PC-9 (cell line): ENCODE measurements at regions of chr15 and their contacts with region 1.

Region 1: GRCh38 chr15:95875121-95875688 is 455.3 kb upstream of the NR2F2 start:
- DNase-seq: peak; percentile 63 to 79
- H3K4me3 ChIP-seq: no peak overlapping the region
- H3K27ac ChIP-seq: peak overlapping the region; percentile 25
- H3K4me1 ChIP-seq: peaks cover 37% of the 10 kb centered on the region
- H3K27me3 ChIP-seq: no peaks in the 10 kb centered on the region
- CTCF ChIP-seq: no peak

Region 2: DNA sequence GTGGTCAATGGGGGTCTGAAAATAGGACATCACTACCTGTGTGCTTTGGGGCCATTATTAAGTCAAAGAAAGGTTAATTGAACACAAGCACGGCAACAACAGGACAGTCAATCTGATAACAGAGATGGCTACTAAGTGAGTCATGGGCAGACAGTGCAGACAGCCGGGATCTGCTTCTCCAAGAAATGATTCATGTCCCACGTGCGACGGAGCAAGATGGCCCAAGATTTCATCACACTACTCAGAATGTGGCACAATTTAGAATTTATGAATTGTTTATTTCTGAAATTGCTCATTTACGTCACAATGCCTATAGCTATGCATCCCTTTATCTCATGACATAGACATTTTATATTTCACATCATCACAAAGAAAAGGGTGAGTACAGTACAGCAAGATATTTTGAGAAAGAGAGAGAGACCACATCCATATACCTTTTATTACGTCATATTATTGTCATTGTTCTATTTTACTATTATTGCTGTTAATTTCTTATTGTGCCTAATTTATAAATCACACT is 315.3 kb before region 1 on chr15:
- CTCF ChIA-PET with region 1: no interaction called
- POLR2A ChIA-PET with region 1: no interaction called
- intact Hi-C with region 1: loop called (anchors 10 kb)
- DNase-seq: peak; percentile 28 to 69
- H3K4me3 ChIP-seq: no peak overlapping the region
- H3K27ac ChIP-seq: peak overlapping the region; percentile 82
- H3K4me1 ChIP-seq: peaks cover 38% of the 10 kb centered on the region
- H3K27me3 ChIP-seq: no peaks in the 10 kb centered on the region
- CTCF ChIP-seq: no peak

Region 3: DNA sequence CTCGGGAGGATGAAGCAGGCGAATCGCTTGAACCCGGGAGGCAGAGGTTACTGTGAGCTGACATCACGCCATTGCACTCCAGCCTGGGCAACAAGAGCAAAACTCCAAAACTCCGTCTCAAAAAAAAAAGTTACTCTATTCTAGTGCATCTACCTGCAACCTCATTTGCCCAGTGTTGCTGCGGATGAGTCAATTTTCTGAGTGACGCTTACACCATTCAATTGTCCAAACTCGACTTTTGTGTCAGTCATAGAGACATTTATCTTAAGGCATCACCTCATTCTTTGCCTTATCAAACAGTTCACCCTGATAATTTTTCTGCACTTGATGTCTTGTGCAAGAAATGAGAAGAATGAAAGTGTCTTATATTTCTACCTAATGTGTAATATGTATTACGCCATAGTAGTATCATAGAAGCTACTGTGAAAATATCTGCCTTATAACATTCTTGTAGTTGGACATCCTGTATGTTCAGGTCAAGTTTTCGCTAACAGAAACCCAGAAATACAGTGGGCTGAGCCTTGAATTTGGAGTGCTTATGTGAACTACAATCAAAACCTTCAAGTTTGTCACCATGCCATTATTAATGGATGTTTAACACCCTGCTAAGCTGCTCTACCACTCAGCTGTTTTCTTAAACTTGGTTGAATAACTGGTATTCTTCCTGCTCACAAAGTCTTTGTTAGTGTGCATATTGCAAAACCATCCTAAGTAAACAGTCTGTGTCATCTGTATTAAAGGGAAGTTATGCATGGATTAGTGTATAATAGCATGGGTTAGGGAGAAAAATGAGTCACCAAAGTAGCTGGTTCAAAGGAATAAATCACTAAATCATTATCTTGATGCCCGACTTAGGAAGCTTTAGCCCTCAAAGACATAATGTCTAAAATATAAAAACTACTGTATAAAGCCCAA is 75.7 kb before region 1 on chr15:
- CTCF ChIA-PET with region 1: no interaction called
- POLR2A ChIA-PET with region 1: no interaction called
- intact Hi-C with region 1: loop called (anchors 1 kb)
- DNase-seq: peak; percentile 19 to 97
- H3K4me3 ChIP-seq: no peak overlapping the region
- H3K27ac ChIP-seq: peak overlapping the region; percentile 66
- H3K4me1 ChIP-seq: peaks cover 20% of the 10 kb centered on the region
- H3K27me3 ChIP-seq: no peaks in the 10 kb centered on the region
- CTCF ChIP-seq: no peak

Region 4: DNA sequence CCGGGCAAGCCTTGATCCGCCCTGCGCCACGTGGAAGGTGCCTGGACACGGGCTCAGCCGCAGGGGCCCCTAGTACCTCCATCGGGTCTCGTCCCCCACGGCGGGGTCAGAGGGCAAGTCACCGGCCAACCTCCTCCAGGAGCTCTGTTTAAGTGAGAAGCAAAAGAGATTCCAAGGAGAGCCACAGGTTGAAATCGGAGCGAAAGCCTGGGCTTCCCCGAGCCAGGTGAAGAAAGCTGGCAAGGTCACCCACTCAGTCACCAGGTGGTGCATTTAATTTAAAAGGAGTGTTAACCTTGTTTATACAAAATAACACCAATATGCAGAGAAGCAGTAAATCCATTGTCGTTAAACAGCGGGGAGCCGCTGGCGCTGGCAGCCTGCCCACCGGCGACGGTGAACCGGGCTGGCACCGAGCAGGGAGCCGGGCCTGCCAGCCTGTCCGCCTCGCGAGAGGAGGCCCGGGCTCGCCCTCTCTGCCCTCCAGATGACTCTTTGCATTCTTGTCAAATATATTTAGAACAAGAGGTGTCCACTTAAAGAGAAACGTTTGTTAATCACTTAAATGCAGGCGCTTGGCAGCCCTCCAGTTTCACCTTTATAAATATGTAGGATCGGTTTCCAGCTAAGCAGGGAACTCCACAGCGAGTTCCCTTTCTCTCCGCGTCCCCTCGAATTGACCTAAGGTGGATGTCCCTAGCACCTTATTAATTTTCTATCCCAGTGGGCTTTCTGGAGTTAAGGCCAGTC is 178.0 kb after region 1 on chr15:
- CTCF ChIA-PET with region 1: no interaction called
- POLR2A ChIA-PET with region 1: no interaction called
- intact Hi-C with region 1: loop called (anchors 1 kb)
- DNase-seq: peak; percentile 79 to 84
- H3K4me3 ChIP-seq: peak overlapping the region; percentile 68
- H3K27ac ChIP-seq: peak overlapping the region; percentile 92
- H3K4me1 ChIP-seq: peaks cover 53% of the 10 kb centered on the region
- H3K27me3 ChIP-seq: no peaks in the 10 kb centered on the region
- CTCF ChIP-seq: no peak

Region 5: GRCh38 chr15:96273317-96274086 is 398.3 kb after region 1 on chr15:
- CTCF ChIA-PET with region 1: no interaction called
- POLR2A ChIA-PET with region 1: no interaction called
- intact Hi-C with region 1: loop called (anchors 1 kb)
- DNase-seq: peak; percentile 85 to 100
- H3K4me3 ChIP-seq: no peak overlapping the region; the same call in 1 of the 2 replicates
- H3K27ac ChIP-seq: peak overlapping the region; percentile 95
- H3K4me1 ChIP-seq: peaks cover 86% of the 10 kb centered on the region
- H3K27me3 ChIP-seq: no peaks in the 10 kb centered on the region
- CTCF ChIP-seq: no peak

Region 6: DNA sequence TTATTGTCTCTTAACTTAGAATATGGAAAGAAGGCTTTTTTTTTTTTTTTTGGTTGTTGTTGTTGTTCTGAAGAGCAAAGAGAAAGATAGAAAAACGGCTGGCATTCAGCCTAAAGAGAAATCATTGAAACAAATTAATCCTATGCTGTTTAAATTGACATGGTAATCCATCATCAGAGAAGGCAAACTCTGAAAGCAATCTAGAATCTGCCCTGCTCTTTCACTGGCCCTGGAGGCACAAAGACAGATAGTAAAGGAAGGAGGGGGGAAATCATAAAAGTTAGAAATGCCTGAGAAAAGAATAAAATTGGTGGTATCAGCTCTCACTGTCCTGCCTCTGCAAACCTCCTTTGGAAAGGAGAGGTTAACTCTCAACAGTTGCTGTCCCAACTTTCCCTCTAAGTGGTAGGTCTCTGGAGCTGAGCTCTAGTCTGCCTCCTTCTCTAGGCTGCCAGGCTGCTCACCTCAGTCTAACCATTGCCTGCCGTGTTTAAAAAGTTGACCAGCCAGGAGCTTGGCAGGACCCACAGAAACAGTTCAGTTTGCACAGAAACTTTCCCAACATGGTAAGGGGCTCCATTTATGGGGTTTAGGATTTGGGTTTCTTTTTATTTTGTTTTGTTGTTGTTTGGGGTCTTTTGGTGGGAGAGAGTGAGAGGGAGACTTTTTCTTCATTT is 441.9 kb after region 1 on chr15:
- CTCF ChIA-PET with region 1: no interaction called
- POLR2A ChIA-PET with region 1: no interaction called
- intact Hi-C with region 1: no loop called
- DNase-seq: no peak
- H3K4me3 ChIP-seq: no peak overlapping the region
- H3K27ac ChIP-seq: no peak overlapping the region
- H3K4me1 ChIP-seq: peaks cover 13% of the 10 kb centered on the region
- H3K27me3 ChIP-seq: no peaks in the 10 kb centered on the region
- CTCF ChIP-seq: no peak

Region 7: GRCh38 chr15:96338766-96339618 is 463.8 kb after region 1 on chr15:
- CTCF ChIA-PET with region 1: no interaction called
- POLR2A ChIA-PET with region 1: interaction called, 23 read pairs
- intact Hi-C with region 1: no loop called
- DNase-seq: no peak
- H3K4me3 ChIP-seq: no peak overlapping the region
- H3K27ac ChIP-seq: peak overlapping the region; percentile 25; the same call in 1 of the 2 replicates
- H3K4me1 ChIP-seq: peaks cover 52% of the 10 kb centered on the region
- H3K27me3 ChIP-seq: no peaks in the 10 kb centered on the region
- CTCF ChIP-seq: no peak